Activated B cell treated with CpG ODN at 0.5 μM for 24 hours (primary cell): ENCODE measurements at regions of chr7 and their contacts with region 1.

Region 1: GRCh38 chr7:146175716-146176115 is 59.1 kb downstream of the CNTNAP2 start:
- DNase-seq: no peak
- ATAC-seq: no peak
- H3K4me3 Mint-ChIP-seq: no peak overlapping the region
- H3K27ac Mint-ChIP-seq: no peak overlapping the region
- H3K4me1 Mint-ChIP-seq: no peaks in the 10 kb centered on the region
- H3K27me3 Mint-ChIP-seq: no peaks in the 10 kb centered on the region
- CTCF ChIP-seq: no peak

Region 2: GRCh38 chr7:146136357-146136875 is 39.3 kb before region 1 on chr7:
- CTCF ChIA-PET with region 1: no interaction called
- POLR2A ChIA-PET with region 1: no interaction called
- intact Hi-C with region 1: loop called (anchors 1 kb)
- DNase-seq: no peak
- ATAC-seq: no peak
- H3K4me3 Mint-ChIP-seq: no peak overlapping the region
- H3K27ac Mint-ChIP-seq: no peak overlapping the region
- H3K4me1 Mint-ChIP-seq: no peaks in the 10 kb centered on the region
- H3K27me3 Mint-ChIP-seq: no peaks in the 10 kb centered on the region
- CTCF ChIP-seq: no peak